ENCODE measurements at regions of chr2 and their contacts with region 1.

Region 1: DNA sequence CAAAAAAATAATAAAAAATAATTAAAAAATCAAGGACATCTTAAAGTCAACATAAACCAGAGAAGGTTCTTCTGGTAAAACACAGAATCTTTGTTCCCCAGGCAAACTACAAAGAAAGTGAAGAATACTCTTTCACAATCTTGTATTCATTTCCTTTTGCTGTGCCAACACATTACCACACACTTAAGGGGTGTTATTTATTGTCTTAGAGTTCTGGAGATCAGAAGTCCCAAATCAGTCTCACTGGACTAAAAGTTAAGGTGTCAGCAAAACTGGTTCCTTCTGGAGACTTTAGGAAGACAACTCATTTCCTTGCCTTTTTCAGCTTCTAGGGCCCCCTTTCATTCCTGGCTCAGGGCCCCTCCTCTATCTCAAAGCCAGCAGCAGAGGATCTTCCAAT is 12.2 kb upstream of the CAB39 start:
- DNase-seq: no peak
- H3K4me3 Mint-ChIP-seq: no peak overlapping the region
- H3K27ac Mint-ChIP-seq: no peak overlapping the region
- H3K4me1 Mint-ChIP-seq: peaks cover 20% of the 10 kb centered on the region
- H3K27me3 Mint-ChIP-seq: no peaks in the 10 kb centered on the region

Region 2: GRCh38 chr2:230347659-230348305 is 352.7 kb before region 1 on chr2:
- CTCF ChIA-PET with region 1: no interaction called
- POLR2A ChIA-PET with region 1: no interaction called
- DNase-seq: peak; percentile 53
- H3K4me3 Mint-ChIP-seq: peak overlapping the region; percentile 20
- H3K27ac Mint-ChIP-seq: peak overlapping the region; percentile 92
- H3K4me1 Mint-ChIP-seq: peaks cover 63% of the 10 kb centered on the region
- H3K27me3 Mint-ChIP-seq: no peaks in the 10 kb centered on the region

Region 3: GRCh38 chr2:230712443-230713330 is 12.2 kb after region 1 on chr2 and contains the start of gene CAB39:
- CTCF ChIA-PET with region 1: interaction called, 18 read pairs
- POLR2A ChIA-PET with region 1: interaction called, 3 read pairs
- DNase-seq: peak; percentile 86
- H3K4me3 Mint-ChIP-seq: peak within 1 kb of the TSS; percentile 97
- H3K27ac Mint-ChIP-seq: peak within 1 kb of the TSS; percentile 97
- H3K4me1 Mint-ChIP-seq: peaks cover 48% of the 10 kb centered on the region
- H3K27me3 Mint-ChIP-seq: no peaks in the 10 kb centered on the region
- total RNA-seq, gene CAB39: 135 to 154 TPM